ENCODE measurements at regions of chr15 and their contacts with region 1.

Region 1: GRCh38 chr15:93087825-93088199 is 1.2 kb downstream of the RGMA start:
- DNase-seq: peak; percentile 61 to 84
- H3K4me3 ChIP-seq: peak overlapping the region; percentile 54 to 75 (median 63)
- H3K27ac ChIP-seq: no peak overlapping the region
- H3K4me1 ChIP-seq: peaks cover 0 to 12% (median 1%) of the 10 kb centered on the region in 4 experiments; a peak in 6 of 7 replicates
- H3K27me3 ChIP-seq: peaks cover 11 to 42% (median 37%) of the 10 kb centered on the region in 4 experiments
- CTCF ChIP-seq: peak; percentile 72 to 90 (median 87)
- EP300 ChIP-seq: no peak
- POLR2A ChIP-seq: no peak
- RAD21 ChIP-seq: peak; percentile 90 to 93

Region 2: GRCh38 chr15:93035953-93036800 is 51.6 kb before region 1 on chr15:
- CTCF ChIA-PET with region 1: interaction called, 22 read pairs
- POLR2A ChIA-PET with region 1: no interaction called
- DNase-seq: peak in 1 of 2 experiments; percentile 67
- H3K4me3 ChIP-seq: no peak overlapping the region
- H3K27ac ChIP-seq: no peak overlapping the region
- H3K4me1 ChIP-seq: no peaks in the 10 kb centered on the region; a peak in 2 of 7 replicates
- H3K27me3 ChIP-seq: peaks cover 0 to 2% (median 0%) of the 10 kb centered on the region in 4 experiments; a peak in 1 of 7 replicates
- CTCF ChIP-seq: peak; percentile 48 to 78 (median 76)
- EP300 ChIP-seq: no peak
- POLR2A ChIP-seq: no peak
- RAD21 ChIP-seq: peak; percentile 66 to 76

Region 3: DNA sequence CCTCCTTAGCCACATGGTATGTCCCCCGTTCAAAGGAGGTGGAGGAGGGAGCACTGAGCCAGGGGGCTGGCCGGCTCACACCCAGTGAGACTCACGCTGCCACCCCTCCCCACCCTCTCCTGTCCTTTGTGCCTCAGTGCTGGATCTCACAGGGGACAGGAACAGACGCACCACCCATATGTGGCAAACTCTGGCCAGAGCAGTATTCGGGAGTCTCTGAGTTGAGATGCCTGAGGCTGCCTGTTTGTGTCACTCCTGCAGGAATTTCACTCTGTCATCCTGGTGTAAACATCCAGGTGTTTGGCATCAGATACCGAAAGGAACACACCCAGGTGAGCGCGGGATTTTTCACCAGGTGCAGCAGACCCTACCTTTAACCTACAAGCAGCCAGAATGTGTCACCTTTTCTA is 24.5 kb before region 1 on chr15:
- CTCF ChIA-PET with region 1: interaction called, 37 read pairs
- POLR2A ChIA-PET with region 1: interaction called, 5 read pairs
- DNase-seq: no peak
- H3K4me3 ChIP-seq: no peak overlapping the region
- H3K27ac ChIP-seq: peak overlapping the region; percentile 69
- H3K4me1 ChIP-seq: peaks cover 23 to 63% (median 47%) of the 10 kb centered on the region in 4 experiments
- H3K27me3 ChIP-seq: no peaks in the 10 kb centered on the region
- CTCF ChIP-seq: no peak
- EP300 ChIP-seq: no peak
- POLR2A ChIP-seq: no peak
- RAD21 ChIP-seq: no peak

Region 4: DNA sequence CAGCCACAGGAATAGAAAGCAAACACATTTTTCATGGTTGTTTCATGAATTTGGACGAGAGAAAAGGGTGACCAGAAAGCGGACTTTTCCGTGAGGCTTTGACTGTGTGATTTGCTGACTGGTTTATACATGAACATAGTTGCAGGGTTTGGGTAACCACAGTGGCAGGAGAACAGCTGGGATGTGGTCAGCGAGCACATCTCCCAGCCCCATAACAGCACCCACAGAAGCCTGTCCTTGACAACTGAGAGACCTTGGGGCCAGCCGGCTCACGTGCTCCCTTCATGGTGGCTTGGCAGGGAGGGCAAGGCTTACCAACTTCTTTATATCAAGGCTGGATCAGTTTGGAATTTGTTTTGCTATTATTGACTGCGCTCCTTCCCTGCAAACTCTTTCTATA is 14.4 kb after region 1 on chr15:
- CTCF ChIA-PET with region 1: interaction called, 11 read pairs
- POLR2A ChIA-PET with region 1: interaction called, 3 read pairs
- DNase-seq: no peak
- H3K4me3 ChIP-seq: no peak overlapping the region
- H3K27ac ChIP-seq: no peak overlapping the region
- H3K4me1 ChIP-seq: peaks cover 0 to 15% (median 5%) of the 10 kb centered on the region in 4 experiments; a peak in 5 of 7 replicates
- H3K27me3 ChIP-seq: no peaks in the 10 kb centered on the region; a peak in 2 of 7 replicates
- CTCF ChIP-seq: no peak
- EP300 ChIP-seq: no peak
- POLR2A ChIP-seq: no peak
- RAD21 ChIP-seq: no peak

Region 5: DNA sequence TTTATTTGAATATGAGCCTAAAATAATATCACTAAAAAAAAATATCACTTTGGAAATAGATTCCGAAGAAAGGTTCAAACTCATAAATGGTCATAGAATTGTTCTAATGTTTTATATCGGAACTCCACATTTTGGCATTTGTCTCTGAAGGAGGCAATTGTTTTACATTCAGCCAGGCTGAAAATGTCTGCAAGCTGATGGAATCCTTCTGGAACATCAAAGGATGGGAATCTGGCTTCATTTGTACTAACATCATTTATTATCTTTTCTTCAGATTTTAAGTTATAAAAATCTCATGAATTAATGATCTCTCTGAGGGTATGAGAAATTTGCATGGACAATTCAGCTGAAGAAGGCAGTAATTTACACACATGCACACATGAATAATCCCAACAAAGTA is 252.6 kb after region 1 on chr15:
- CTCF ChIA-PET with region 1: interaction called, 10 read pairs
- POLR2A ChIA-PET with region 1: no interaction called
- DNase-seq: no peak
- H3K4me3 ChIP-seq: no peak overlapping the region
- H3K27ac ChIP-seq: no peak overlapping the region
- H3K4me1 ChIP-seq: peaks cover 0 to 2% (median 0%) of the 10 kb centered on the region in 4 experiments; a peak in 1 of 7 replicates
- H3K27me3 ChIP-seq: peaks cover 0 to 2% (median 0%) of the 10 kb centered on the region in 4 experiments; a peak in 1 of 7 replicates
- CTCF ChIP-seq: no peak
- EP300 ChIP-seq: no peak
- POLR2A ChIP-seq: no peak
- RAD21 ChIP-seq: no peak